SK-MEL-5 (cell line): ENCODE measurements at regions of chr21 and their contacts with region 1.

Region 1: GRCh38 chr21:16279731-16280581 is 550.2 kb downstream of the USP25 start:
- DNase-seq: peak; percentile 86

Region 2: GRCh38 chr21:16124378-16125130 is 155.4 kb before region 1 on chr21:
- in situ Hi-C with region 1: no loop called
- DNase-seq: no peak

Region 3: DNA sequence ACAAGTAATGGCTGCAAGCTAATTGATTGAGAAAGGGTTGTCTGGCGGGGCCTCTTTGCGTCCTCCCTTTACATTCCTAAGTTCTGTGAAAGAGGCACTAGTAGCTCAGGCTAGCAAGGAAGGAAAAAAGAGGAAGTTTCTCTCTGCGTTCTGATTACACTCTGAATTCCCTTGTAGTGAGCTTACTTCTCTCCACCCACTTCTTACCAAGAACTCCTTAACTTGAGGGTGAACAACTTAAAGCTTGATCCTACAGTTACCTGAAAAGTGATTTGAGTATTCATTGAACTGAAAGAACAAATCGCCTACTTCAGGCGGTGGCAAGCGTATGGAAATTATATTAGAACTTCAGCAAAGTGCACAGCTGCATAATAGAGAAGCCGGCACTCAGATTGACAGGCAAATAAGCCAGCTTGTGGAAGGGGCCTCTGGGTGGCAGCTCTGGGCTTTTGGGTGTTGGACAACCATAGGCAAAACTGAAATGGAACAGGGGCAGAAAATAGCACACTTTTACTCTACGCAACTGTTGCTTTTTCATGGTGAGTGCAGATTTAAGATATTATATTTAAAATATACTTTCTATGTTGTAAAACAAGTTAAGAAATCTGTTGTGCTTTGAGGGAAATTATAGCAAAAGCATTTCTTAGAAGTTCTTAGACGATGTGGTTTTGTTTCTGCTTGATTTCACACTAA is 85.7 kb before region 1 on chr21:
- in situ Hi-C with region 1: loop called (anchors 25 kb)
- DNase-seq: peak; percentile 85

Region 4: DNA sequence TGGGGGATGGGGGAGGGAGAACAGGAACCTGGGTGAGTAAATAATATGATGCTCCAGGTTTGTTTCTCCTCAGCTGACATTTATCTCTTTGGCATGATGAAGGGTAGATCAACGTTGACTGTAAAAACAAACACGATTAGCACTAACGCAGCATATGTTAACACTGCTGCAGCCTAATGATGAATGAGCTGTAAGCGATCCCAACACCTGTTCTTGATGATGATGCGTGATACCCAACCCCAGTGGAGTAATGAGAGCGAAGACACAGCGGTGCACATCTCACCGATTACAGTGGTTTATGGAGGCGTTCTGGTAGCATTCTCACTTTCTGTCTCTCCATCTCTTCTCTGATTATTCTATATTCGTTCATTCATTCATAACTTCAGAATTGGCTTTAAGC is 90.2 kb after region 1 on chr21:
- in situ Hi-C with region 1: no loop called
- DNase-seq: no peak

Region 5: GRCh38 chr21:16437586-16437985 is 157.6 kb after region 1 on chr21:
- in situ Hi-C with region 1: no loop called
- DNase-seq: no peak

Region 6: DNA sequence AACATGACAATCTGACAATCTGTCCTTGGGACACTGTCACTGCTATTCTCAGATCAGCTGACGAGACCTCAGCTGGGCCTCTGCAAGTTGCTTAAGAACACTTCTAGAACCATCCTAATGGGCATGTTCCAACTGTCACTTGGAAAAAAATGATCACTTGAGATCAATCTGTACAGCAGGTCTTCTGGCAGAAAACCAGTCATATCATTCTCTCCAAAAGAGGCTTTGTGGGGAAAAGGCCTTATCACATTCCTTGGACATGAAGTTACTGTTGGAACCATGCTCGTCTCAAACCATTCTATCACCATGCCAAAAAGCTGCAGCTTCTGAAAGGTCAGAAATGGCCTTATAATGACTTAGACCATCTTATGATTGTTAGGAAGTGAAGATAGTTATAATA is 194.0 kb after region 1 on chr21:
- in situ Hi-C with region 1: no loop called
- DNase-seq: peak; percentile 37